Activated B cell treated with CpG ODN at 0.5 μM for 24 hours (primary cell): ENCODE measurements at regions of chr1 and their contacts with region 1.

Region 1: DNA sequence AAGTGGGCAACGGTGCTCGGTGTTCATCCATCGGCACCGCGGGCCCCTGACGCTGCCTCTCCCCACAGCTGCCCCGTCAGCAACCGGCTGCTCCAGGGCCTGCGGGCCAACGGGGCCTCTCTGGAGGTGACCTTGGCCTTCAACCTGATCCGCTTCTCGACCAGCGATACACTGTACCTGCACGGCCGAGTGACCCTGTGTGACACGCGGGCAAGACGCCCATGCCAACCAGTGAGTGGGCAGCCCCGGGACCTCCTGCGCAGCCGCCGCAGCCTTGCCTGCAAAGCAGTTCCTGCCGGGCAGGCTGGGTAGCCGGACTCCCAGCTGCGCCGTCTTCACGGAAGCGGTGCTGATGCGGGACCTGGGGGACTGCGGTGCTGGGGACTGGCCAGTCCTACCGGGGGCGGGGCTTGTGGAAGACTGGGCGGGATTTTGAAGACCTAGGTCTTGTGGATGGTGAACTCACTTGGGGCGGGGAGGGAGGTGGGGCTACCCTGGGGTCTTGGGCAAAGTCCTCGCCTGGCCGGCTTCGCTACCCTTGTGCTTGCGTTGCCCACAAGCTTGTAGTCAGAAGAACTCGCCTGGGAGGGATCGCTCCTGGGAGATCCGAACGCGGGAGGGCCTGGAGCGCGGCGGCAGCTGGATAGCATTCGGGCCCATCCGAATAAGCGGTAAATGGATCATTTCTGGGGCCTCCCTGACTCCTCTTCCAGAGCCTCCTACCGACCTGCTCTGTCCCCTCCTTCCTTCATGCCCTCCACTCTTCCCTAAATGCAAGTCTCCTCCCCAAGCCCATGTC is 8.8 kb upstream of the CEP85 start:
- DNase-seq: peak; percentile 32
- ATAC-seq: peak; percentile 83
- H3K4me3 Mint-ChIP-seq: peak overlapping the region; percentile 60
- H3K27ac Mint-ChIP-seq: no peak overlapping the region
- H3K4me1 Mint-ChIP-seq: peaks cover 20% of the 10 kb centered on the region
- H3K27me3 Mint-ChIP-seq: peaks cover 25% of the 10 kb centered on the region
- CTCF ChIP-seq: no peak

Region 2: GRCh38 chr1:26190373-26190987 is 34.8 kb before region 1 on chr1 and contains the start of gene CATSPER4:
- CTCF ChIA-PET with region 1: no interaction called
- POLR2A ChIA-PET with region 1: no interaction called
- intact Hi-C with region 1: no loop called
- DNase-seq: no peak
- ATAC-seq: no peak
- H3K4me3 Mint-ChIP-seq: no peak within 1 kb of the TSS
- H3K27ac Mint-ChIP-seq: no peak within 1 kb of the TSS
- H3K4me1 Mint-ChIP-seq: no peaks in the 10 kb centered on the region
- H3K27me3 Mint-ChIP-seq: no peaks in the 10 kb centered on the region
- CTCF ChIP-seq: no peak
- total RNA-seq, gene CATSPER4: not detected in 2 replicates

Region 3: DNA sequence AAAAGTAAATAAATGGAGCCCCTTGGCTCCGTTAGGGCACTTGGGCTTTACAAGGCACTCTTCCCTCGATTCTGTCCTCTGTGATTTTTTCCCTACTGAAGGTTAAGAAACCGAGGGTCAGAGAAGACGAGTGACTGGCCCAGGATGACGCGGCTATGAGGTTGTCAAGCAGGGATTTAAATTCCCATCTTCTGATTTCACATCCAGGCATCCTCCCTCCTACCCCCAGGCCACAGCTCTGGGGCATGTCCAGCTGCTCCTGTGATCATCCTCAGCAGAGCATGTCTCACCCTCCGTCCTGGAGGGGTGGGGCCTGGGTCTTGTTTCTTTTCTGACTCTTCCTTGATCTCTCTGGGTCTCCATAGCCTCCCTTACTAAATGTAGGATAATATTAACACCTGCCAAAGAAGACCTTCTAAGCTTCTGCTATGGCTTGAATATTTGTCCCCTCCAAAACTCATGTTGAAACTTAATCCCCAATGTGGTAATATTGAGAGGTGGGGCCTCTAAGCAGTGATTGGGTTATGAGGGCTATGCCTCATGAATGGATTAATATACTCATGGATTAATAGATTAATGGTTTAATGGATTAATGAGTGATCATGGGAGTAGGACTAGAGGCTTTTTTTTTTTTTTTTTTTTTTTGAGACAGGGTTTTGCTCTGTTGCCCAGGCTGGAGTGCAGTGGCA is 124.1 kb after region 1 on chr1:
- CTCF ChIA-PET with region 1: no interaction called
- POLR2A ChIA-PET with region 1: interaction called, 11 read pairs
- intact Hi-C with region 1: no loop called
- DNase-seq: no peak
- ATAC-seq: no peak
- H3K4me3 Mint-ChIP-seq: no peak overlapping the region
- H3K27ac Mint-ChIP-seq: no peak overlapping the region
- H3K4me1 Mint-ChIP-seq: no peaks in the 10 kb centered on the region
- H3K27me3 Mint-ChIP-seq: no peaks in the 10 kb centered on the region
- CTCF ChIP-seq: no peak